Breast epithelium (tissue), 4 donors: ENCODE measurements at regions of chr13 and their contacts with region 1.

Region 1: DNA sequence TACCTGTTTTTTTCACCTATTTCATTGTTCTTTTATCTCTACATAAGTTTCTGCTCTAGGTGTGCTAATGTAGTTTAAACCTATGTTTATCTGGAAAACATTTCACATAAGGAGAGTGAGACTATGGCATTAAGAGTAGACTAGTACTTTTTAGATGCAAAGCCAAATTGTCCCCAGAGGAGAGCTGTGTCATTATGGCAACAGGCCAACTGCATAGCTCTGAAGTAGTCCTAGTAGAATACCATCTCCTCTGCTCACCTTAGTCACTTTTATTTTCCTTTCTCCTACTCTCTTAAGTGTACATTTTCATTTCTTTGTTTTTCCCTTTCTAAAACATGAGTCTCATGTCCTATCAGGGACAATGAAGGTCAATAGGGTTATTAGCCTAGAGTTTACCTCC is 123.1 kb downstream of the ITGBL1 start:
- DNase-seq: no peak
- H3K4me3 ChIP-seq: no peak overlapping the region
- H3K27ac ChIP-seq: no peak overlapping the region
- H3K4me1 ChIP-seq: no peaks in the 10 kb centered on the region
- H3K27me3 ChIP-seq: no peaks in the 10 kb centered on the region
- CTCF ChIP-seq: no peak
- POLR2A ChIP-seq: no peak

Region 2: GRCh38 chr13:101611491-101612475 is 36.2 kb after region 1 on chr13:
- intact Hi-C with region 1: loop called (anchors 2 kb)
- DNase-seq: no peak
- H3K4me3 ChIP-seq: no peak overlapping the region
- H3K27ac ChIP-seq: no peak overlapping the region
- H3K4me1 ChIP-seq: no peaks in the 10 kb centered on the region
- H3K27me3 ChIP-seq: no peaks in the 10 kb centered on the region
- CTCF ChIP-seq: no peak
- POLR2A ChIP-seq: no peak